HepG2 (cell line): ENCODE measurements at regions of chr2 and their contacts with region 1.

Region 1: GRCh38 chr2:10329880-10330699 is 27.4 kb downstream of the HPCAL1 start:
- DNase-seq: peak; percentile 78
- ATAC-seq: peak; percentile 65
- H3K4me3 ChIP-seq: peak overlapping the region; percentile 47 to 67 (median 54)
- H3K27ac ChIP-seq: peak overlapping the region; percentile 60
- H3K4me1 ChIP-seq: peaks cover 84% of the 10 kb centered on the region
- H3K27me3 ChIP-seq: no peaks in the 10 kb centered on the region; a peak in 1 of 5 replicates
- CTCF ChIP-seq: no peak
- EP300 ChIP-seq: peak; percentile 10 to 57; a peak in 1 of 4 replicates
- POLR2A ChIP-seq: peak in 1 of 2 experiments; percentile 35; a peak in 1 of 4 replicates
- RAD21 ChIP-seq: no peak

Region 2: DNA sequence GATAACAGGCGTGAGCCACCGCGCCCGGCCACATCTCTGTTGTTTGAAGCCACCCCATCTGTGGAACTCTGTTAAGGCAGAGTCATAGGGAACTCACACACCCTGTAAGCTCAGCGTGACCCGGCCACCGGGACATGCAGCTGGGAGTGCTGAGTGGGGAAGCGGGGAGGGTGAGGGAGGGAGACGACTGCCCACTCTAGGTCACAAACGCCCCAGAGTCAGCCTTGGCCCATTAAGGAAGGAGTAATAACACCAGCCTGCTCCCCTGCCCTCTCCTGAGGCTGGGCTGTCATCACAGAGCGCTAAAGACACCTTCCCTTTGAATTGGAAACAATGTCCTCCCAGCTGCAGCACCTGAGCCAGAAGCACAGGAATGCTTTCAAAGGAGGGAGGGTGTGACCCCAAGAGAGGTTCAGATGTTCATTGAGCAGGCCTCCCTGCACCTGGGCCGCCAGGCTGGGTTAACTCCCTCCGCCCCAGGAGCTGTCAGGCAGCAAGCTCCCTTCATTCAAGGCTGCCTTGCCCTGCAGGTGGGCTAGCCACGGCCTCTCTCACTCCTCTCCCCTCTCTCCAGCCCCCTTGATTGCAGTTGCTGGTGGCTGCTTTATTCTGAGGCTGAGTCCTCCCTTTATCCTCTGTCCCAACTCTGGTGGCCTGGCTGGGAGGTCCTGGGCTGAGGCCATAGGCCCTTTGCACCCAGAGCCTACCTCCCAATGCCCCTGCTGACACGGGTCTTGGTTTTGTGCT is 104.6 kb before region 1 on chr2:
- CTCF ChIA-PET with region 1: no interaction called
- POLR2A ChIA-PET with region 1: no interaction called
- in situ Hi-C with region 1: no loop called
- intact Hi-C with region 1: loop called (anchors 5 kb)
- DNase-seq: no peak
- ATAC-seq: peak; percentile 34
- H3K4me3 ChIP-seq: peak overlapping the region in 2 of 3 experiments; percentile 10 to 50; a peak in 2 of 6 replicates
- H3K27ac ChIP-seq: no peak overlapping the region
- H3K4me1 ChIP-seq: peaks cover 50% of the 10 kb centered on the region
- H3K27me3 ChIP-seq: peaks cover 19 to 65% of the 10 kb centered on the region in 2 experiments; a peak in 4 of 5 replicates
- CTCF ChIP-seq: no peak
- EP300 ChIP-seq: no peak
- POLR2A ChIP-seq: no peak
- RAD21 ChIP-seq: no peak

Region 3: DNA sequence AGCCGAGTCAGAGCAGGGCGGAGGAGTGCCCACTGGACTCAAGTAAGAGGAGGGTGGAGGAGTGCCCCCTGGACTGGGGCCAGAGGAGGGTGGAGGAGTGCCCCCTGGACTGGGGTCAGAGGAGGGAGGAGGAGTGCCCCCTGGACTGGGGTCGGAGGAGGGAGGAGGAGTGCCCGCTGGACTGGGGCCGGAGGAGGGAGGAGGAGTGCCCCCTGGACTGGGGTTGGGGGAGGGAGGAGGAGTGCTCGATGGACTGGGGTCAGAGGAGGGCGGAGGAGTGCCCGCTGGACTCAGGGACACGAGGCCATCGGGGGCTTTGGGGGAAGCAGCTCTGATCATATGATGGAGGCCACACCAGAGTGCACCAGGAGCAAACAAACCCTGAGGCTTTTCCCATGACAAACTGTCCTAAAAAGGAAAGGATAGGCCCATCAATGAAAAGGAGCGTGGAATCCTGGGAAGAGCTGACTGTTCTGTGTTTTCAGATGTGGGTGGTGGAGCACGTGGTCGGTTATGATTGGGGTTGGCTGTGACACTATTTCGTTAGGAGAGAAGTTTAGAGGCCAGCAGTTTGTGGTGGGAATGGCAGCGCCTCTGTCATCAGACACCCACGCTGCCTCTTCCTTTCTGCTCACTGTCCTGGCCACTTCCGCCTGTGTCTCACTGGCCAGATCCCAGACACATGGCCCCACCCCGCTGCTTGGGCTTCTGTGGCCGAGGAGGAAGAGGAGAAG is 51.9 kb before region 1 on chr2:
- CTCF ChIA-PET with region 1: no interaction called
- POLR2A ChIA-PET with region 1: interaction called, 21 read pairs
- in situ Hi-C with region 1: no loop called
- intact Hi-C with region 1: no loop called
- DNase-seq: peak; percentile 87
- ATAC-seq: peak; percentile 69
- H3K4me3 ChIP-seq: peak overlapping the region; percentile 27 to 78 (median 52)
- H3K27ac ChIP-seq: peak overlapping the region; percentile 69
- H3K4me1 ChIP-seq: peaks cover 47% of the 10 kb centered on the region
- H3K27me3 ChIP-seq: peaks cover 3 to 18% of the 10 kb centered on the region in 2 experiments; a peak in 4 of 5 replicates
- CTCF ChIP-seq: peak; percentile 4
- EP300 ChIP-seq: peak in 1 of 2 experiments; percentile 52; a peak in 2 of 4 replicates
- POLR2A ChIP-seq: peak in 1 of 2 experiments; percentile 43; a peak in 1 of 4 replicates
- RAD21 ChIP-seq: no peak

Region 4: GRCh38 chr2:10400568-10400977 is 70.5 kb after region 1 on chr2:
- CTCF ChIA-PET with region 1: no interaction called
- POLR2A ChIA-PET with region 1: interaction called, 8 read pairs
- in situ Hi-C with region 1: loop called (anchors 5 kb)
- intact Hi-C with region 1: loop called (anchors 2 kb)
- DNase-seq: no peak
- ATAC-seq: no peak
- H3K4me3 ChIP-seq: peak overlapping the region in 1 of 3 experiments; percentile 47; a peak in 1 of 6 replicates
- H3K27ac ChIP-seq: peak overlapping the region; percentile 83
- H3K4me1 ChIP-seq: peaks cover 34% of the 10 kb centered on the region
- H3K27me3 ChIP-seq: no peaks in the 10 kb centered on the region
- CTCF ChIP-seq: no peak
- EP300 ChIP-seq: no peak
- POLR2A ChIP-seq: no peak
- RAD21 ChIP-seq: no peak

Region 5: GRCh38 chr2:10467401-10467800 is 137.3 kb after region 1 on chr2:
- CTCF ChIA-PET with region 1: no interaction called
- POLR2A ChIA-PET with region 1: no interaction called
- in situ Hi-C with region 1: no loop called
- intact Hi-C with region 1: no loop called
- DNase-seq: no peak
- ATAC-seq: peak; percentile 79
- H3K4me3 ChIP-seq: no peak overlapping the region
- H3K27ac ChIP-seq: no peak overlapping the region
- H3K4me1 ChIP-seq: peaks cover 7% of the 10 kb centered on the region; the same call in 1 of the 2 replicates
- H3K27me3 ChIP-seq: peaks cover 4 to 54% of the 10 kb centered on the region in 2 experiments; a peak in 4 of 5 replicates
- CTCF ChIP-seq: peak; percentile 62
- EP300 ChIP-seq: no peak
- POLR2A ChIP-seq: no peak
- RAD21 ChIP-seq: no peak